Activated T-helper 2 cell treated with anti-CD3 and anti-CD28 coated beads, Interferon-gamma antibody, Interleukin-2, Interleukin-4, amounts not matched to agents 10 μg/mL and 5 μg/mL and 100 μg/mL, durations not matched to agents 14 hours and 24 hours and 36 hours (primary cell): ENCODE measurements at regions of chr14 and their contacts with region 1.

Region 1: GRCh38 chr14:81170104-81170828 is 50.5 kb downstream of the GTF2A1 start:
- DNase-seq: peak; percentile 83
- H3K4me3 Mint-ChIP-seq: peak overlapping the region; percentile 86
- H3K27ac Mint-ChIP-seq: peak overlapping the region; percentile 97
- H3K4me1 Mint-ChIP-seq: peaks cover 39% of the 10 kb centered on the region
- H3K27me3 Mint-ChIP-seq: no peaks in the 10 kb centered on the region

Region 2: GRCh38 chr14:80987235-80988032 is 182.8 kb before region 1 on chr14:
- intact Hi-C with region 1: loop called (anchors 5 kb)
- DNase-seq: peak; percentile 44
- H3K4me3 Mint-ChIP-seq: no peak overlapping the region
- H3K27ac Mint-ChIP-seq: no peak overlapping the region
- H3K4me1 Mint-ChIP-seq: peaks cover 11% of the 10 kb centered on the region
- H3K27me3 Mint-ChIP-seq: peaks cover 10% of the 10 kb centered on the region

Region 3: GRCh38 chr14:80996049-80996901 is 174.0 kb before region 1 on chr14:
- intact Hi-C with region 1: loop called (anchors 1 kb)
- DNase-seq: no peak
- H3K4me3 Mint-ChIP-seq: no peak overlapping the region
- H3K27ac Mint-ChIP-seq: no peak overlapping the region
- H3K4me1 Mint-ChIP-seq: peaks cover 9% of the 10 kb centered on the region
- H3K27me3 Mint-ChIP-seq: peaks cover 51% of the 10 kb centered on the region

Region 4: DNA sequence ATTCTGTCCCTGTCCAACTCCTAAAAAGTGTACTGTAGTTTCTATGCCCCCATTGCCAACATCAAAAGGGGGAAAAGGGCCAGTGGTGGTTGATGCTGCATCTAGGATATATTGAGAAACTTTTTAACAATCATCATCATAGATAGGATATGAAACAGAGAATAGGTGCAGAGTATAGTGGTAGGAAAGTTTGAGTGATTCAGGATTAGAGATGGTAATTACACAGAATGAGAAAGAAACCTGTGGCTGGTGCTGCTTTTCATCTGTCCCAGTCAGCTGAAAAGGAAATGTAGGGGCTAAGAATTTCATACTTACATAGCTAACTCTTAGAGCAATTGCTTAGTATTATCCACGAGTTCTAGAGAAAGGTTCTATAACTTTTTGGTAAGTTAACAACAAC is 17.1 kb before region 1 on chr14:
- intact Hi-C with region 1: loop called (anchors 2 kb)
- DNase-seq: no peak
- H3K4me3 Mint-ChIP-seq: no peak overlapping the region
- H3K27ac Mint-ChIP-seq: peak overlapping the region; percentile 5
- H3K4me1 Mint-ChIP-seq: peaks cover 14% of the 10 kb centered on the region
- H3K27me3 Mint-ChIP-seq: no peaks in the 10 kb centered on the region

Region 5: GRCh38 chr14:81220830-81221578 is 50.7 kb after region 1 on chr14 and contains the start of gene GTF2A1:
- intact Hi-C with region 1: loop called (anchors 1 kb)
- DNase-seq: peak; percentile 95
- H3K4me3 Mint-ChIP-seq: peak within 1 kb of the TSS; percentile 100
- H3K27ac Mint-ChIP-seq: peak within 1 kb of the TSS; percentile 100
- H3K4me1 Mint-ChIP-seq: peaks cover 30% of the 10 kb centered on the region
- H3K27me3 Mint-ChIP-seq: peaks cover 2% of the 10 kb centered on the region
- total RNA-seq, gene GTF2A1: 41.2 and 45.1 TPM in 2 replicates

Region 6: DNA sequence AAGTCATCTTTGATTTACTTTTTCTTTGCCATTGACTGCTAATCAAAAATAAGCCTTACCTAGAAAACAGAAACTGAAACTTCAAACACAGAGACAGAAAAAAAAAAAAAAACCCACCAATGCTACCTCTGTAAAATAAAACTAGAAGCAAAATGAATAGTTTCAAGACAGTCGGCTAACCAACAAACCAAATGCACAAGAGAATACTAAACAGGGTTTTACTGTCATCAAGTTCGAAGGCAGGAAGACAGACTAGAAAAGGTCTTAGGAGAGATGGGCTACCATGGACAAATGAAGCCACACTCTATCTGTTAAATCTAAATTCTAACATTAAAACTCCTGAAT is 303.9 kb after region 1 on chr14:
- intact Hi-C with region 1: loop called (anchors 5 kb)
- DNase-seq: no peak
- H3K4me3 Mint-ChIP-seq: peak overlapping the region; percentile 62
- H3K27ac Mint-ChIP-seq: peak overlapping the region; percentile 66
- H3K4me1 Mint-ChIP-seq: peaks cover 50% of the 10 kb centered on the region
- H3K27me3 Mint-ChIP-seq: no peaks in the 10 kb centered on the region

Region 7: DNA sequence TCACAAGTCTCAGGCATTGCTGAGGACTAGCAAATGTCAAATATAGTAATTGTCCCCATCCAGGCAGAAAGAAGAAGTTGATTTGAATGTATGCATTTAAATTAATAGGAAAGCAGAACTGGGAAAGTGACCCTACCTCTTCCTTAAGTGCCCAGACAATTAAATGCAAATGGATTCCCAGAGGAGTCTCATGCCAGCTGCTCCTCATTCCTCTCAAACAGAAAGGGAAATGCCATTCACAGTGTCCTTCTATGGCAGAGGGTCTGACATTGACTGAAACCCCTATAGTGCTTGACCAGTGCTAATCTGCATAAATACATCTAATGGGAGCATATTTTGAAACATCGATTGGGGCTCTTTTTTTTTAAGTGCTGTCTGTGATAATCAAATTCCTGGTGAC is 655.8 kb after region 1 on chr14:
- intact Hi-C with region 1: no loop called
- DNase-seq: no peak
- H3K4me3 Mint-ChIP-seq: no peak overlapping the region
- H3K27ac Mint-ChIP-seq: no peak overlapping the region
- H3K4me1 Mint-ChIP-seq: no peaks in the 10 kb centered on the region
- H3K27me3 Mint-ChIP-seq: no peaks in the 10 kb centered on the region